ENCODE measurements at regions of chr11 and their contacts with region 1.

Region 1: GRCh38 chr11:118304568-118305248 is at the start of gene CD3E:
- DNase-seq: peak; percentile 31 to 83 (median 79)
- ATAC-seq: peak; percentile 83
- H3K4me3 ChIP-seq: peak within 1 kb of the TSS; percentile 88
- H3K4me3 Mint-ChIP-seq: peak within 1 kb of the TSS; percentile 95 to 100 (median 99)
- H3K27ac ChIP-seq: peak within 1 kb of the TSS; percentile 92
- H3K27ac Mint-ChIP-seq: peak within 1 kb of the TSS; percentile 97 to 100 (median 100)
- H3K4me1 ChIP-seq: peaks cover 41 to 62% of the 10 kb centered on the region in 2 donors
- H3K4me1 Mint-ChIP-seq: peaks cover 54 to 91% (median 78%) of the 10 kb centered on the region in 7 donors
- H3K27me3 ChIP-seq: no peaks in the 10 kb centered on the region
- H3K27me3 Mint-ChIP-seq: no peaks in the 10 kb centered on the region
- total RNA-seq, gene CD3E: 392 to 706 (median 670) TPM

Region 2: GRCh38 chr11:117907982-117908895 is 396.5 kb before region 1 on chr11:
- CTCF ChIA-PET with region 1: no interaction called
- POLR2A ChIA-PET with region 1: no interaction called
- intact Hi-C with region 1: no loop called
- DNase-seq: no peak
- ATAC-seq: no peak
- H3K4me3 ChIP-seq: no peak overlapping the region
- H3K4me3 Mint-ChIP-seq: peak overlapping the region in 1 of 10 donors; percentile 63
- H3K27ac ChIP-seq: no peak overlapping the region
- H3K27ac Mint-ChIP-seq: peak overlapping the region in 1 of 9 donors; percentile 83
- H3K4me1 ChIP-seq: no peaks in the 10 kb centered on the region
- H3K4me1 Mint-ChIP-seq: peaks cover 0 to 24% (median 0%) of the 10 kb centered on the region in 7 donors
- H3K27me3 ChIP-seq: no peaks in the 10 kb centered on the region
- H3K27me3 Mint-ChIP-seq: peaks cover 0 to 4% (median 0%) of the 10 kb centered on the region in 5 donors

Region 3: GRCh38 chr11:118283756-118284350 is 20.9 kb before region 1 on chr11:
- CTCF ChIA-PET with region 1: interaction called, 10 read pairs
- POLR2A ChIA-PET with region 1: interaction called, 3 read pairs
- intact Hi-C with region 1: no loop called
- DNase-seq: peak in 1 of 9 donors; percentile 20
- ATAC-seq: no peak
- H3K4me3 ChIP-seq: no peak overlapping the region
- H3K4me3 Mint-ChIP-seq: peak overlapping the region in 8 of 10 donors; percentile 11 to 60 (median 42)
- H3K27ac ChIP-seq: peak overlapping the region; percentile 25
- H3K27ac Mint-ChIP-seq: peak overlapping the region; percentile 14 to 90 (median 83)
- H3K4me1 ChIP-seq: peaks cover 0 to 9% of the 10 kb centered on the region in 2 donors
- H3K4me1 Mint-ChIP-seq: peaks cover 23 to 43% (median 27%) of the 10 kb centered on the region in 7 donors
- H3K27me3 ChIP-seq: no peaks in the 10 kb centered on the region
- H3K27me3 Mint-ChIP-seq: no peaks in the 10 kb centered on the region

Region 4: GRCh38 chr11:118343981-118344515 is 39.3 kb after region 1 on chr11 and contains the start of gene CD3G:
- CTCF ChIA-PET with region 1: interaction called, 90 read pairs
- POLR2A ChIA-PET with region 1: no interaction called
- intact Hi-C with region 1: loop called (anchors 1 kb)
- DNase-seq: peak; percentile 39 to 83 (median 77)
- ATAC-seq: peak; percentile 88
- H3K4me3 ChIP-seq: peak within 1 kb of the TSS; percentile 88
- H3K4me3 Mint-ChIP-seq: peak within 1 kb of the TSS; percentile 89 to 98 (median 96)
- H3K27ac ChIP-seq: peak within 1 kb of the TSS; percentile 96
- H3K27ac Mint-ChIP-seq: peak within 1 kb of the TSS; percentile 84 to 100 (median 98)
- H3K4me1 ChIP-seq: peaks cover 22 to 35% of the 10 kb centered on the region in 2 donors
- H3K4me1 Mint-ChIP-seq: peaks cover 43 to 77% (median 65%) of the 10 kb centered on the region in 7 donors
- H3K27me3 ChIP-seq: no peaks in the 10 kb centered on the region
- H3K27me3 Mint-ChIP-seq: no peaks in the 10 kb centered on the region
- total RNA-seq, gene CD3G: 122 to 220 (median 192) TPM

Region 5: GRCh38 chr11:118401151-118401878 is 96.6 kb after region 1 on chr11 and contains the start of gene ATP5MG:
- CTCF ChIA-PET with region 1: interaction called, 3 read pairs
- POLR2A ChIA-PET with region 1: interaction called, 5 read pairs
- intact Hi-C with region 1: loop called in 1 of 2 experiments (anchors 1 kb)
- DNase-seq: peak; percentile 83 to 96 (median 93)
- ATAC-seq: peak; percentile 71
- H3K4me3 ChIP-seq: peak within 1 kb of the TSS; percentile 79
- H3K4me3 Mint-ChIP-seq: peak within 1 kb of the TSS; percentile 97 to 99 (median 98)
- H3K27ac ChIP-seq: peak within 1 kb of the TSS; percentile 97
- H3K27ac Mint-ChIP-seq: peak within 1 kb of the TSS; percentile 97 to 100 (median 100)
- H3K4me1 ChIP-seq: peaks cover 37 to 58% of the 10 kb centered on the region in 2 donors
- H3K4me1 Mint-ChIP-seq: peaks cover 39 to 78% (median 71%) of the 10 kb centered on the region in 7 donors
- H3K27me3 ChIP-seq: no peaks in the 10 kb centered on the region
- H3K27me3 Mint-ChIP-seq: peaks cover 0 to 2% (median 0%) of the 10 kb centered on the region in 5 donors
- total RNA-seq, gene ATP5MG: 140 to 241 (median 154) TPM

Region 6: GRCh38 chr11:118565051-118565450 is 260.3 kb after region 1 on chr11:
- CTCF ChIA-PET with region 1: no interaction called
- POLR2A ChIA-PET with region 1: no interaction called
- intact Hi-C with region 1: loop called (anchors 5 to 10 kb)
- DNase-seq: no peak
- ATAC-seq: no peak
- H3K4me3 ChIP-seq: no peak overlapping the region
- H3K4me3 Mint-ChIP-seq: peak overlapping the region; percentile 26 to 96 (median 80)
- H3K27ac ChIP-seq: peak overlapping the region; percentile 48
- H3K27ac Mint-ChIP-seq: peak overlapping the region; percentile 54 to 97 (median 88)
- H3K4me1 ChIP-seq: no peaks in the 10 kb centered on the region
- H3K4me1 Mint-ChIP-seq: peaks cover 9 to 29% (median 20%) of the 10 kb centered on the region in 7 donors
- H3K27me3 ChIP-seq: no peaks in the 10 kb centered on the region
- H3K27me3 Mint-ChIP-seq: no peaks in the 10 kb centered on the region

Region 7: DNA sequence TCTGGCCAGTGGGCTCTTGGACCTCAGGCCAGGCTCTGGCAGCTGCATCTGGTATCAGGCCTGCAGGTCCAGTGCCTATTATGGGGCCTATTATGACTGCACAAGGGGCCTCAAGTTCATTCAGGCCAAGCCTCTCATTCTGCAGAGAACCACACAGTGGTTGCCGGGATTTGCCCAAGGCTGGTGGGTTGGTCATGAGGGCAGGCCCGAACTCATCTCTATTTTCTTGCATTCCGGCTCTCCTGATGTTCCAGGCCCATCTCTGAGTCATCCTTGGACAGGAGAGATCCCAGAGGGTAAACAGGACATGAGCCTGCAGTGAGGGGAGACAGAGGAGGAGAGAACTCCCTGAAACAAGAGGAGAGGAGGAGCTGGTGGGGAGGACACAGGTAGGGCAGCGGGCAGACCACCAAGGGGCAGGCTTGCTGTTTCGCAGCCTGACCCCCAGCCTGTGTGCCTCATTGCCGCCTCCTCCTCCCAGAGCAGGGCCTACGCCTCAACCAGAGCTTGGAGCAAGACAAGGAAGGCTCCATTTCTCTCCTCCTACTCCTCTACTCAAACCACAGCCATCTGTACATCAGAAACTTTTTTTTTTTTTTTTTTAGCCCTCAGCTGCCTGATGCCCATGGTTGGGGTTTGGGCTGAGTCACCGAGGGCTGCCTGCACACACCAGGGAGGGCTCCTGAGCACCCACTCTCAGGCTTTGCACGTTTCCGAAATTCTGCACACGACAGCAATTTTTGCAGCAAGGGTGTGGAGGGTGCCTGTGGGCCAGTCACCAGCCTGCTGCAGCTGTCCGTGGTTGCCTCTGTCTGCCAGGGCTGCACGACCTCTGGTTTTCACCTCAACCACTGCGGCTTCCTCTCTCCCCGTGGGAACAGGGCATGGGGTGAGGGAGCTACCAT is 387.5 kb after region 1 on chr11:
- CTCF ChIA-PET with region 1: no interaction called
- POLR2A ChIA-PET with region 1: no interaction called
- intact Hi-C with region 1: no loop called
- DNase-seq: peak in 4 of 9 donors; percentile 14 to 39 (median 25)
- ATAC-seq: peak; percentile 50
- H3K4me3 ChIP-seq: peak overlapping the region; percentile 18
- H3K4me3 Mint-ChIP-seq: peak overlapping the region; percentile 13 to 72 (median 61)
- H3K27ac ChIP-seq: peak overlapping the region; percentile 32
- H3K27ac Mint-ChIP-seq: peak overlapping the region; percentile 55 to 98 (median 80)
- H3K4me1 ChIP-seq: peaks cover 55 to 63% of the 10 kb centered on the region in 2 donors
- H3K4me1 Mint-ChIP-seq: peaks cover 34 to 76% (median 62%) of the 10 kb centered on the region in 7 donors
- H3K27me3 ChIP-seq: no peaks in the 10 kb centered on the region
- H3K27me3 Mint-ChIP-seq: peaks cover 0 to 8% (median 0%) of the 10 kb centered on the region in 5 donors

Measured in naive thymus-derived CD4-positive, alpha-beta T cell (primary cell).